ENCODE measurements at regions of chr16 and their contacts with region 1.

Region 1: DNA sequence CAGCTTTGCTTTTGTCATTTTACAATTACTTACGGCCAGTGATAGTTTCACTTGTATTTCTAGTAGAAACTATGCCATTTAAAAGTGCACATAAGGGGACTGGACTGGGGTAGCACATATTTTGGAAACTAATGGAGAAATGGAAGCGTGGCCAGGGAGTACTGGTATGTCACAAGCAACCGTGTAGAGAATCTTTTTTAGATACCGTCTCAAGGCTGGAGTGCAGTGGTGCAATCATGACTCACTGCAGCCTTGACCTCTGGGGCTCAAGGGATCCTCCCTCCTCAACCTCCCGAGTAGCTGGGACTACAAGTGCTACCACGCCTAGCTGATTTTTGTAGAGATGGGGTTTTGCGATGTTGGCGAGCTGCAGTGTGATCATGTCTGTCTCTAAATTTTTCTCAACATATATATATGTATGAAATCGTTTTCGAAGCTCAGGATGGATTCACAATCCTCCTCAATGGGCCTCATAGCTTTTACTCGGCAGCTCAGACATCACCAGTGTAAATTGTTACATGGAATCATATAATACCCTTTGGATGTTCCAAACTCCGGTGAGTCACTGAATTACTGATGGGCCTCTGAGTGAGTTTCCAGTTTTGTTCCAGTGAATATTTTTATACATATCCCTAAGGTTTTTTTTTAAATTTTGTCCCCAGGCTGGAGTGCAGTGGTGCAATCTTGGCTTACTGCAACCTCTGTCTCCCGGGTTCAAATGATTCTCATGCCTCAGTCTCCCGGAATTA is 51.7 kb downstream of the ZNF778 start:
- DNase-seq: no peak
- ATAC-seq: no peak
- H3K4me3 Mint-ChIP-seq: no peak overlapping the region
- H3K27ac Mint-ChIP-seq: no peak overlapping the region
- H3K4me1 Mint-ChIP-seq: no peaks in the 10 kb centered on the region
- H3K27me3 Mint-ChIP-seq: no peaks in the 10 kb centered on the region
- CTCF ChIP-seq: no peak

Region 2: DNA sequence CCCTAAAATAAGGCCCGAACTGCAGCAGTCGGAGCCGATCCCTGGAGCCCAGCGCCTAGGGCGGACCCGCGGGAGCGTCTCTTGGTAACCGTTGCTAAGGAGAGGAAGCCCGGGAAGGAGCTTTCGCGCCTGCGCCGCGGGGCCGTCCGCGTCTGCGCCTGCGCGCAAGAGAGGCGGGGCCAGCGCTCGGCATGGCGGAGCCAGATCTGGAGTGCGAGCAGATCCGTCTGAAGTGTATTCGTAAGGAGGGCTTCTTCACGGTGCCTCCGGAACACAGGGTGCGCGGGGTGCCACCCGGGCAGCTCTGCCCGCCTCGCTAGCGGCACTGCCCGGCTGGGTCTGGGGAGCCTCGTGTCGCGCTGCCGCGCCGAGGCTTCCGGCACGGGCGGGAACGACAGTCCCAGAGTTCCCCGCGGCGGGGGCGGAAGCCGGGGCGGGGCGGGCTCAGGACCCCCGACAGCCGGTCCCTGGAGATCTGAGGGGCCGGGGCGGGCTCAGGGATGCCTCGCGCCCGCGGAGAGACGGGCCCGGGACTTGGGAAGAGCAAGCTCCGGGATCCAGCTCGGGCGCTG is 417.4 kb after region 1 on chr16 and contains the start of gene CDK10:
- CTCF ChIA-PET with region 1: no interaction called
- POLR2A ChIA-PET with region 1: interaction called, 11 read pairs
- DNase-seq: peak; percentile 94
- ATAC-seq: peak; percentile 86
- H3K4me3 Mint-ChIP-seq: peak within 1 kb of the TSS; percentile 85
- H3K27ac Mint-ChIP-seq: peak within 1 kb of the TSS; percentile 87; the same call in 1 of the 2 replicates
- H3K4me1 Mint-ChIP-seq: peaks cover 7% of the 10 kb centered on the region
- H3K27me3 Mint-ChIP-seq: peaks cover 5% of the 10 kb centered on the region
- CTCF ChIP-seq: no peak
- total RNA-seq, gene CDK10: 79.8 to 102 TPM (median 81.6 TPM) in 3 replicates

Measured in WTC11 (cell line).